Natural killer cell (primary cell): ENCODE measurements at regions of chr10 and their contacts with region 1.

Region 1: DNA sequence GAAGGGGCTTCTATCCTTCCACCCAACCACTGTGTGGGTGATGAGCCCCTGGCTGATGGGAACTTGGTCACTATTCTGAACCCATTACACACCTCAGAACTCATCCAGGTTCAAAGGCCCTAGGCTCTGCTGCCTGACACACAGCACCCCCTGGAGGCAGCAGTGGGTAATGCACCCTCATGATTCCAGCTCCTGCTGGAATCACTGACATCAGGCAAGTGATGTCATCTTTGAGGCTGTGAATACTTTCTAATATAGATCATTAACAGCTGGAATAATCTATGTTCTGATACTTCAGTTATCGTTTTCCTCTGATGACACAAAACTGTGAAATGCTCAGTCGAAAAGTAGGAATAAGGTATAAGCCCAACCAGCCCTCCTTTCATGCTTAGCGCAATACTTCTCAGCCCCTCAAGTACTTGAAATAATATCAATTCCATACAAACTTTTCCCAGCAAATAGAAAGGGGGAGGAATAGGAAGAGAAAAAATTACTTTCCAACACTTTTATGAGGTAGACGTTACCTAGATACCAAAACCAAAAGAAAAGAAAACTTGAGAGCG is 7.5 kb upstream of the RBP3 start:
- DNase-seq: peak; percentile 52 to 81
- ATAC-seq: peak; percentile 57 to 83 (median 75)
- H3K4me3 ChIP-seq: no peak overlapping the region
- H3K4me3 Mint-ChIP-seq: no peak overlapping the region
- H3K27ac ChIP-seq: no peak overlapping the region
- H3K27ac Mint-ChIP-seq: no peak overlapping the region
- H3K4me1 ChIP-seq: no peaks in the 10 kb centered on the region
- H3K4me1 Mint-ChIP-seq: peaks cover 0 to 4% of the 10 kb centered on the region in 2 donors
- H3K27me3 ChIP-seq: no peaks in the 10 kb centered on the region
- H3K27me3 Mint-ChIP-seq: peaks cover 9 to 22% of the 10 kb centered on the region in 2 donors
- CTCF ChIP-seq: peak; percentile 98

Region 2: DNA sequence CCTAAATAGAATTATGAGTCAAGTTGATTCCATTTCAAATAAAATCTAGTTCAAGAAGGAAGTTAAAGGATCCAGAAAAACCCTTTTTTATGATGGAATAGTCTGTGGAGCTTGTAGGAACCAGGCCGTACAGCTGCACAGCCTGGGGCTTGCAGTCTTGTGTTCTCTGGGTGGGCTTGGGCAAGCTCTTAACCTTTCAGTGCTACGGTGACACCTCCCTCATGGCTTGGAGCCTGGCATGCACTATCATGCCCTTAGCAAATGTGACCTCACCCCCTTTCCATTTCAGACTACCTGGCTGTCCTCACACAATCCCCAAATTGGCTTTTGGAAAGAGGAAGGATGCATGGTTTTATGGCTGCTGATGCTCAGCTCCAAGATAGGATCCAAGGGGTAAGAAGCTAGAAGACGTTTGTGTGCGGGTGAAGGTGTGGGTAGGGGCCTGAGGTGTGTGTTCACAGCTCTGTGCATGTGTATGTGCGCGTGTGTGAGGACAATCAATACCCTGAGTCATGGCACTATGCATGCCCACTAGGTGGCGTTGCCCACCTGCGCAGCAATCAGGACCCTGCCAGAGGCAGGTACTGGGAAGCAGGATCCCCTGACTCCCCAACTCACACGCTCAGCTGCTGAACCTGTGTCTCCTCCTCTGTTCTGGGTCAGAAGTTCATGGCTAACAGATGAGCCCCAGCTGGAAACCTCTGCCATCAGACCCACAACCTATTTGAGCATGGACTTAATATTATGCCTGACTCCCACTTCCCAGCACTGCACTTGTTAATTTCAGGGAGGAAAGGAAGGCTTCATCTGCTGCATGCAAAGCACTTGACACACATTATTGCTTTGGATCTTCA is 316.1 kb before region 1 on chr10:
- intact Hi-C with region 1: loop called (anchors 1 kb)
- DNase-seq: peak in 1 of 2 donors; percentile 83
- ATAC-seq: peak in 1 of 3 donors; percentile 59
- H3K4me3 ChIP-seq: no peak overlapping the region
- H3K4me3 Mint-ChIP-seq: no peak overlapping the region
- H3K27ac ChIP-seq: no peak overlapping the region
- H3K27ac Mint-ChIP-seq: no peak overlapping the region
- H3K4me1 ChIP-seq: no peaks in the 10 kb centered on the region
- H3K4me1 Mint-ChIP-seq: peaks cover 0 to 9% of the 10 kb centered on the region in 2 donors
- H3K27me3 ChIP-seq: no peaks in the 10 kb centered on the region
- H3K27me3 Mint-ChIP-seq: no peaks in the 10 kb centered on the region
- CTCF ChIP-seq: peak; percentile 33

Region 3: GRCh38 chr10:47318706-47319105 is 22.0 kb before region 1 on chr10:
- intact Hi-C with region 1: no loop called
- DNase-seq: no peak
- ATAC-seq: no peak
- H3K4me3 ChIP-seq: no peak overlapping the region
- H3K4me3 Mint-ChIP-seq: no peak overlapping the region
- H3K27ac ChIP-seq: no peak overlapping the region
- H3K27ac Mint-ChIP-seq: no peak overlapping the region
- H3K4me1 ChIP-seq: no peaks in the 10 kb centered on the region
- H3K4me1 Mint-ChIP-seq: no peaks in the 10 kb centered on the region
- H3K27me3 ChIP-seq: no peaks in the 10 kb centered on the region
- H3K27me3 Mint-ChIP-seq: peaks cover 0 to 3% of the 10 kb centered on the region in 2 donors
- CTCF ChIP-seq: no peak